ENCODE measurements at regions of chr5 and their contacts with region 1.

Region 1: DNA sequence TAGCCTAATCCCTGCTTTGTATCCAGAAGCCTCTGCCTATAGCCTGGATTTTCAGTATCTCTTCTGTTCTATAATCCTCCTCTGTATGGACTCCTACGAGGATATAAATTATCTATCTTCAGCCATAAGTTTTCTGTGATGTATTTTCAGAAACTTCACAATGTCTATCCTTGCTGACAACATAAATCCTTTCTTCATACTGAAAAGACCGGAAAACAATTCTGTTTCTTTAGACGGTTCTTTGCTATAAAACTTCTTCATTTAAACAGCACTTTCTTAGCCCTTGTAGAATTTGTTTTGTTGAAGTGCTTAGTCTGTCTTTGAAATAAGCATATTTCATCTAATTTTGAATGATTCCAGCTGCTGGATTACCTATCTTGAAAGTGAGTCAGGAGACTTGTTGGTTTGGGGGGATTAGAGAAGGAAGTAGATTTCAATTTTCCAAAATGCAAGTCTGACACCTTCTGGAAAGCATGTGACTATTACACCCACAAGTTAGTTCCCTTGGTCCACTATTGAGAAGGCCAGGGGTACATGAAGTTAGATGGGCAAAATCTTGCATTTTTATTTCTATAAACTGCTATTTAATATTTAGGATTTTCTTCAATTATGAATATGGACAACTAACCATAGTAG is 96.3 kb upstream of the RANBP3L start:
- DNase-seq: no peak
- ATAC-seq: peak; percentile 58 to 78

Region 2: GRCh38 chr5:35938568-35939227 is 459.3 kb before region 1 on chr5 and contains the start of gene CAPSL:
- intact Hi-C with region 1: no loop called
- DNase-seq: no peak
- ATAC-seq: peak; percentile 65 to 67
- total RNA-seq, gene CAPSL: not detected

Region 3: GRCh38 chr5:36177715-36178523 is 220.1 kb before region 1 on chr5:
- intact Hi-C with region 1: loop called in 1 of 2 experiments (anchors 10 kb)
- DNase-seq: no peak
- ATAC-seq: peak; percentile 51 to 57

Region 4: DNA sequence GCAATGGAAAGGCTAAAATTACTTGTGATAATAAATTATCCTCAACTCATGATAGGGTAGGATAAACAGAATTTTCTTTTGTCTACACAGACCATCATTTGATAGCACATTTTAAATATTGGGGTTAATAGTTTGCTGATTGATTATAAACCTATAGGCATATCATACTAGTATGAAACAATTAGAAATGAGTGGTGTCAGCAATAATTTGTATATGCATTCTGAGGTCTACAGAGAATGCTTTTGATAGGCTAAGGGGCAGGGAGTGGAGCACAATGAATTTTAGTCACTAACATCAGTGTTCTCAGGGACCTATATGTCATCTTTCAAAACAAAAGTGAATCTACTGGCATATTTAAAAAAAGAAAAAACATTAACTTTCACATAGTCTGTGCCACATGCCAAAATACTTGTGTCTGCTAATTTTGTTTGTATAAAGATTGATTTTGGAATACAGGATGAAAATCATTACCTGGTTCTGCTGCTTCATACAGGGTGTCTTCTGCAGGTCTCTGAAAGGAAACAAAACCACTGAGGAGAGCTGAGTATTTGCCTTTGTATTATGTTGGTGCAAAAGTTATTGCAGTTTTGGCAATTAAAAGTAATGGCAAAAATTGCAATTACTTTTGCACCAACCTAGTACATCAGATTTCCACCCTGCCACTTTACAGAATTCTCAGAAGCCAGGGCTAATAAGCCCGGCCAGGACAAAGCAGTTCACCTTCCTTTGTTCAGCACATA is 128.4 kb before region 1 on chr5:
- intact Hi-C with region 1: loop called (anchors 5 to 10 kb)
- DNase-seq: no peak
- ATAC-seq: no peak